ENCODE measurements at regions of chr7 and their contacts with region 1.

Region 1: DNA sequence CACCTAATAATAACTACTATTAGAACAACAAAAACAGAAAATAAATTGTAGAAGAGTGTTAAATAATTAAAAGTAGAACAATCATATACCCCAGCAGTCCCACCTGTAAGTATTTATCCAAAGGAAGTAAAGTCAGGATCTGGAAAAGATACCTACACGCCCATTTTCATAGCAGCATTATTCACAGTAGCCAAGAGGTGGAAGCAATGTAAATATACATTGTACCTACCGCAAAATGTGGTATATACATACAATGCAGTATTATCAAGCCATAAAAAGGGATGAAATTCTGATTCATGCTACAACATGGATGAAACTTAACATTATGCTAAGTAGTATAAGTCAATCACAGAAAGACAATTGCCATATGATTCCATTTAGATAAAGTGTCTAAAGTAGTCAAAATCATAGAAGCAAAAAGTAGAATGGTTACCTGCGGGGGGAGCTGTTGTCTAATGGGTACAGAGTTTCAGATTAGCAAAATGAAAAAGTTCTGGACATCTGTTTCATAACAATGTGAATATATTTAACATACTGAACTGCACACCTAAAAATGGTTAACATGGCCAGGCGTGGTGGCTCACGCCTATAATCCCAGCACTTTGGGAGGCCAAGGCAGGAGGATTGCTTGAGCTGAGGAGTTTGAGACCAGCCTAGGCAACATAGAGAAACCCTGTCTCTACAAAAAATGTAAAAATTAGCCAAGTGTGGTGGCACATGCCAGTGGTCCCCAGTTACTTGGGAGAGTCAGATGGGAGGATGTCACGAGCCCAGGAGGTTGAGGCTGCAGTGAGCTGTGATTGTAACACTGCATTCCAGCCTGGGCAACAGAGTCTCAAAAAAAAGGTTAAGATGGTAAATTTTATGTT is 6.0 kb upstream of the TMED4 start:
- DNase-seq: no peak
- H3K4me3 ChIP-seq: no peak overlapping the region
- H3K27me3 ChIP-seq: no peaks in the 10 kb centered on the region
- CTCF ChIP-seq: peak; percentile 65

Region 2: DNA sequence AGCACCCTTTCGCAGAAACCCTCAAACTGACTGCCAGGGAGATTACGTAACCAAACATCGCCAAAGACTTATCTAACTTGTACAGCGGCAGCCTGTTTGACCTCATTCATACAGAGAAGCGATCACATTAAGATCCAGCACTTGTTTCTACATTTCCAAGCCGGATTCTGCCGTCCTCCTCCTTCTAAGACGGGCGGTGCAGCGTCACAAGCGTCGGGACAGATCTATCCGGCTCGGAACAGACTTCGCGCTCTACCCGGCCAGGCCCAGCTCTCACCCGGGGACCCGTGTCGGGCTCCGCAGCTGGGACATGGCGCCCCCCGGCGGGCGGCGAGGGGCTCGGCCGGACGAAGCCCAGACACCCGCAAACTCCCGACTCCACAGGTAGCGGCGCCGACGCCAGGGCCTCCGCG is 259.4 kb after region 1 on chr7:
- CTCF ChIA-PET with region 1: interaction called, 21 read pairs
- POLR2A ChIA-PET with region 1: no interaction called
- DNase-seq: peak; percentile 37
- H3K4me3 ChIP-seq: peak overlapping the region; percentile 62
- H3K27me3 ChIP-seq: no peaks in the 10 kb centered on the region
- CTCF ChIP-seq: peak; percentile 80

Measured in BJ (cell line).